Head of caudate nucleus (tissue), 42 donors: ENCODE measurements at regions of chr5 and their contacts with region 1.

Region 1: DNA sequence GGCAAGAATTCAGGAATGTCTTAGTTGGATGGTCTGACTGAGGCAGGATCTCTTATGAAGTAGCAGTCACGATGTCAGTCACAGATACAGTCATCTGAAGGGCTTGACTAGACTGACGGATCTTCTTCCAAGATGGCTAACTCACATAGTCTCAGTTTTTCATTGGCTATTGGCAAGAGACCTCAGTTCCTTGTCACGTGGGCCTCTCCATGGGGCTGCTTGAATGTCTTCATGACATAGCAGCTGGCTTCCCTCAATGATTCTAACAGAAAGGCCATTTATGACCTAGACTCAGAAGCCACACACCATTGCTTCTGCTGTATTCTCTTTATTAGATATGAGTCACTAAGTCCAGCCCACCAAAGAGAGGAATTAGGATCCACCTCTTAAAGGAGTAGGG is 4.7 kb downstream of the APC start:
- DNase-seq: peak; percentile 16 to 92 (median 75)

Region 2: GRCh38 chr5:112467485-112467884 is 274.9 kb before region 1 on chr5:
- intact Hi-C with region 1: no loop called
- DNase-seq: no peak

Region 3: DNA sequence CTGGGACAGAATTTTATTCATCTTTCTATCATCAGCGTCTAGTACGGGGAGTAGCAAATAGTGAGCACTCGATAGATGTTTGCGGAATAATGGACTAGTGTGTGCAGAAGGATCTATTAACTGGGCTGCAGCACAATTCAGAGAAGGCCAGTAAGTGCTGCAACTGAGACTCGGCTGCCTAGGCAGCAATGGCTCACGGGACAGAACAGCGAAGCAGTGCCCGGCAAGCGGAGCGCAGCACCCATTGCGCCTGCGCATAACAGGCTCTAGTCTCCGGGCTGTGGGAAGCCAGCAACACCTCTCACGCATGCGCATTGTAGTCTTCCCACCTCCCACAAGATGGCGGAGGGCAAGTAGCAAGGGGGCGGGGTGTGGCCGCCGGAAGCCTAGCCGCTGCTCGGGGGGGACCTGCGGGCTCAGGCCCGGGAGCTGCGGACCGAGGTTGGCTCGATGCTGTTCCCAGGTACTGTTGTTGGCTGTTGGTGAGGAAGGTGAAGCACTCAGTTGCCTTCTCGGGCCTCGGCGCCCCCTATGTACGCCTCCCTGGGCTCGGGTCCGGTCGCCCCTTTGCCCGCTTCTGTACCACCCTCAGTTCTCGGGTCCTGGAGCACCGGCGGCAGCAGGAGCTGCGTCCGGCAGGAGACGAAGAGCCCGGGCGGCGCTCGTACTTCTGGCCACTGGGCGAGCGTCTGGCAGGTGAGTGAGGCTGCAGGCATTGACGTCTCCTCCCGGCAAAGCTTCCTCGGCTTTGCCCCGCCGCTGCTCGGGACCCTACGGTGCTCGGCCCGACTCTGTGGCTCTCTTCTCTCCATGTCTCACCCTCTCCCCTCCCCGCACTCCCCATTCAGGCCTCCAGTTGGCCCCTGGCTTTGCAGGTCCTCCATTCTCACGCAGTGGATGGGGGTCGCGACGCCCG is 35.0 kb before region 1 on chr5:
- intact Hi-C with region 1: loop called (anchors 5 kb)
- DNase-seq: peak; percentile 94 to 99 (median 98)

Region 4: GRCh38 chr5:113788141-113788655 is 1045.8 kb after region 1 on chr5:
- intact Hi-C with region 1: no loop called
- DNase-seq: no peak